WTC11 (cell line): ENCODE measurements at regions of chr20 and their contacts with region 1.

Region 1: DNA sequence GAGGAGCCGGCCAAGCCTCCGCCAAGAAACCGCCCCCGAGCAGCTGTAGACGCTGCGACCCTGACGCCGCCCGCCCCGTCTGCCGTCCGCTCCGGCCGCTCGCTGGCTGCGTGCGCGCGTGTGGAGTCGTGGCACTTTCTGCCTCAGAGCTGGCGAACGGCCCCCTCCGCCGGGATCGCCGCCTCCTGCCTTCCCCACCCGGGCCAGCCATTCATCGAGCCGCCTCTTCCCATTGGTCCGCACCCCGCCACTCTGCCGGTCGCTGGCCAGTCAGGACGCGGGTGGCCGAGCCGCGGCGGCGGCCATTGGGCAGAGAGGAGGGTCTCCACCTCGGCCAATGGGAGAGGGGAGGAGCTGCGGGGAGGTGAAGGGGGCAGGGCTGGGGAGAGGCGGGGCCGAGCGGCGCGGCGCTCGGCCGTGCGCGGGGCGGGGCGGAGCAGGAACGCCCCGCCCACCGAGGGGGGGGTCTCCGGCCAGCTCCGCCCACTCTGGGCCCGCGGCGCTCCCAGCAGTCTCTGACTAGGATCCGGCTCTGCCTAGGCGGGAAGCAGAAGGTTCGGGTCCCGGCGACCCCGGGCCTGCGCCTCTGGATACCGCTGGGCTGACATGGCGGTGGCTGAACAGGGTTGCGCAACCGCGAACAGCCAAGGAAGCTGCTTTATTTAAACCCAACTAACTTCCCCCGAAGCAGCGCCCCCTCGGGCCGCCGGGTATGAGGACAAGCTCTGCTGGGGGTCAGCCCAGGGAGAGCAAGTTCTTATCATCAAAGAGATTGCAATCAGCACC is at the start of gene RRBP1:
- DNase-seq: peak; percentile 99
- ATAC-seq: peak; percentile 96
- H3K4me3 Mint-ChIP-seq: peak within 1 kb of the TSS; percentile 80
- H3K27ac Mint-ChIP-seq: peak within 1 kb of the TSS; percentile 97
- H3K4me1 Mint-ChIP-seq: peaks cover 37% of the 10 kb centered on the region
- H3K27me3 Mint-ChIP-seq: peaks cover 11% of the 10 kb centered on the region
- CTCF ChIP-seq: peak; percentile 72
- total RNA-seq, gene RRBP1: 161 to 171 TPM (median 162 TPM) in 3 replicates

Region 2: GRCh38 chr20:17648791-17649730 is 33.2 kb before region 1 on chr20:
- CTCF ChIA-PET with region 1: interaction called, 15 read pairs
- POLR2A ChIA-PET with region 1: no interaction called
- DNase-seq: peak; percentile 41
- ATAC-seq: peak; percentile 60
- H3K4me3 Mint-ChIP-seq: no peak overlapping the region
- H3K27ac Mint-ChIP-seq: no peak overlapping the region
- H3K4me1 Mint-ChIP-seq: peaks cover 55% of the 10 kb centered on the region
- H3K27me3 Mint-ChIP-seq: no peaks in the 10 kb centered on the region
- CTCF ChIP-seq: peak; percentile 17; the same call in 1 of the 2 replicates

Region 3: GRCh38 chr20:17693444-17694001 is 11.2 kb after region 1 on chr20:
- CTCF ChIA-PET with region 1: interaction called, 35 read pairs
- POLR2A ChIA-PET with region 1: interaction called, 5 read pairs
- DNase-seq: no peak
- ATAC-seq: peak; percentile 68
- H3K4me3 Mint-ChIP-seq: no peak overlapping the region
- H3K27ac Mint-ChIP-seq: no peak overlapping the region; the same call in none of the 2 replicates
- H3K4me1 Mint-ChIP-seq: peaks cover 11% of the 10 kb centered on the region
- H3K27me3 Mint-ChIP-seq: peaks cover 3% of the 10 kb centered on the region; the same call in 1 of the 2 replicates
- CTCF ChIP-seq: no peak

Region 4: DNA sequence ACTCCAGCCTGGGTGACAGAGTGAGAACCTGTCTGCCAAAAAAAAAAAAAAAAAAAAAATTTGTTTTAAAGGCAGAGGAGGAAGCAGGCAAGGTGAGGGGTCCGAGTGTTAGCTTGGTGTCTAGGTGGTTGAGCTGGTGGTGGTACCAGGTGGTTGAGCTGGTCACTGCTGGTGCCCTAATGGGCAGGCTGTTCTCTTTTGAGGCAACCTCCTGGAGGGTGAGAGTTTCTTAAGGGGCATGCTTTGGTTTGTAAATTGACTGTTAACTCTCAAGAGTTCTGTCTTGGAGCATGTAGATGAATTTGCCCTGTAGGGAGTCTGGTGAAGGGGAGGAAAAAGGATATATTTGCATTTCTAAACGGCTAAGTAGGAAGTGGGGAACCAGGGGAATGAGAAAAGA is 70.2 kb after region 1 on chr20:
- CTCF ChIA-PET with region 1: interaction called, 23 read pairs
- POLR2A ChIA-PET with region 1: no interaction called
- DNase-seq: no peak
- ATAC-seq: peak; percentile 85
- H3K4me3 Mint-ChIP-seq: peak overlapping the region; percentile 47
- H3K27ac Mint-ChIP-seq: peak overlapping the region; percentile 41
- H3K4me1 Mint-ChIP-seq: peaks cover 52% of the 10 kb centered on the region
- H3K27me3 Mint-ChIP-seq: peaks cover 33% of the 10 kb centered on the region
- CTCF ChIP-seq: no peak

Region 5: DNA sequence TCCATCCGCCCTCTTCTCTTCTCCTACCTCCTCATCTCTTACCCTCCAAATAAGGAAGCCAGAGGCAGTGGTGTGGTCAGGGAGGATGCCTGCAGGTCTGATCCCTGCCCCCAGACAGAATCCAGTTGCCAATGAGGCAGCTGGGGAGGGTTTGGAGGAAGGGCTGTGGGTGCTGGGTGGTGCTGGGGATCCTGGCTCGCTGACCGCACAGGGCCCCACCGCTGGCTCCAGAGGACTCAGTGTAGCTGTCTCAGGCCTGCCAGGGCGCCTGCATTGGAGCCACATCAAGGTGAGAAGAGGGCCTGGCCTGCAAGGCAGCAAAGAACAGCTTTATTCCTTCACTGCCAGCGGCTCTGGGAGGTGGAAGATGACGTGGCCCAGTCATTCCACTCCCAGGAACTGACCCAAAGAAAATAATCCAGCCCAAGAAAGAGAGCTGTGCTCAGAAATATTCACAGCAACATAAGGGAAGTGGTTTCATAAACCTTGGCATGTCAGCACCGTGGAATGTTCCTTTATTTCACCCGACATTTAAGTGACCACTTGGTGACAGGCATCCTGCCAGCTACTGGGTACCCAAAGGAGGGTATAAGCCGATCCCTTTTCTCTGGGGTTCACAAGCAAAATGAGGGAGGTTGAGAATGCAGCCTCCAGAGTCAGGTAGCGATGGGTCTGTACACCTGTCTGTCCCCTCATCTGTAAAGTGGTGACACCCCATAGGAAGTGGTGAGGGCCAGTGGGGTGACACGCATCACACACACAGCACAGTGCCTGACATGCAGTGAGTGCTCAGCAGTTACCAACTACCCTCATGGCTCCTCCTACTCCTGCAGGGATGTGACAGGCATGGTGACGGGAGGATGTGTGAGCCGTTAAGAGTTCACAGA is 161.2 kb after region 1 on chr20:
- CTCF ChIA-PET with region 1: interaction called, 11 read pairs
- POLR2A ChIA-PET with region 1: no interaction called
- DNase-seq: no peak
- ATAC-seq: peak; percentile 68
- H3K4me3 Mint-ChIP-seq: no peak overlapping the region
- H3K27ac Mint-ChIP-seq: no peak overlapping the region
- H3K4me1 Mint-ChIP-seq: peaks cover 7% of the 10 kb centered on the region
- H3K27me3 Mint-ChIP-seq: no peaks in the 10 kb centered on the region; the same call in 1 of the 2 replicates
- CTCF ChIP-seq: no peak

Region 6: DNA sequence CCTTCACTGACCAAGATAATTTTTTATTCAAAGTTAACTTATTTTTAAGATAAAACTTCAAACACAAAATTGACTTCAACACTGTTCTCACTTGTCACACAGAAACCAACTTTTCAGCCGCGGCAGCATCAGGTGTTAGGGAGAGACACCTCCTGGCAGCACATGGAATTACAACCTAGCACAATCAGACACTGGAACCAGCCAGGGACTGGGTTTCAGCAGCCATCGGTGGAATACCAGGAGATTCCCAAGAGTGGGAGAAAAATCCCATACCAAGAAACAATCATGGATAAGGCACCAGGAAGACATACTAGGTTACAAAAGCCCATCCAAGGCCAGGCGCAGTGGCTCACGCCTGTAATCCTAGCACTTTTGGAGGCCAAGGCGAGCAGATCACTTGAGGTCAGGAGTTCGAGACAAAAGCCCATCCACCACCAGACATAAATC is 216.3 kb after region 1 on chr20:
- CTCF ChIA-PET with region 1: interaction called, 31 read pairs
- POLR2A ChIA-PET with region 1: interaction called, 12 read pairs
- DNase-seq: peak; percentile 72
- ATAC-seq: peak; percentile 29; the same call in 1 of the 2 replicates
- H3K4me3 Mint-ChIP-seq: no peak overlapping the region
- H3K27ac Mint-ChIP-seq: no peak overlapping the region
- H3K4me1 Mint-ChIP-seq: peaks cover 37% of the 10 kb centered on the region
- H3K27me3 Mint-ChIP-seq: no peaks in the 10 kb centered on the region; the same call in 1 of the 2 replicates
- CTCF ChIP-seq: peak; percentile 92